ENCODE measurements at regions of chr4 and their contacts with region 1.

Region 1: DNA sequence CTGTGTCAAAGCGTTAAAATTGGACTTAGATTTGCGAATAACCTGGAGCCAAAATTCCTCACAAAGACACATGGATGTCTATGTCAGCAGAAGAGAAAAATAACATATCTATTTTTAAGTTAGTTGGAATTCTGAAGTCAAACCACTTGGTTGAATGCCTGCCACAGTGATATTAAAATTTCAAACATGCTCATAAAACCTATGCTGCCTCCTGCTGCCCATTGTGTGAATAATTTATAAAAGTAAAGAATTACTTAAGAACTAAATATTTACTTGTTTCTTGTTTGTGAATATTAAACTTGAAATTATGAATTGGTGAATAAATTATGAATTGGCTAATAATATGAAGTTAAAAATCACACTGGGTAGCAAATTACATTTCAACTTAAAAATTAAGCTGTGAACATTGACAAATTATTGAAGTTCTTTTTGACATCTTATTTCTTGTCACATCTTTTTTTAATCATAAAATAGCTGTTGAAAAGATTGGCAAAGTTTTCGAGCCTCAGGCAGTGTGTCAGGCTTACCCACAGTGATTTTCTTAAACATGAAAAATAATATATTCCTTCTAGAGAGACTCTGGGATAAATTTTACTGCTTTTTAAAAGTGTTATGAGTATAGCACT is 35.4 kb downstream of the FABP2 start:
- DNase-seq: peak in 1 of 2 experiments; percentile 41
- H3K4me3 ChIP-seq: no peak overlapping the region
- H3K27ac ChIP-seq: no peak overlapping the region
- H3K4me1 ChIP-seq: no peaks in the 10 kb centered on the region
- H3K27me3 ChIP-seq: no peaks in the 10 kb centered on the region
- CTCF ChIP-seq: peak; percentile 69

Region 2: DNA sequence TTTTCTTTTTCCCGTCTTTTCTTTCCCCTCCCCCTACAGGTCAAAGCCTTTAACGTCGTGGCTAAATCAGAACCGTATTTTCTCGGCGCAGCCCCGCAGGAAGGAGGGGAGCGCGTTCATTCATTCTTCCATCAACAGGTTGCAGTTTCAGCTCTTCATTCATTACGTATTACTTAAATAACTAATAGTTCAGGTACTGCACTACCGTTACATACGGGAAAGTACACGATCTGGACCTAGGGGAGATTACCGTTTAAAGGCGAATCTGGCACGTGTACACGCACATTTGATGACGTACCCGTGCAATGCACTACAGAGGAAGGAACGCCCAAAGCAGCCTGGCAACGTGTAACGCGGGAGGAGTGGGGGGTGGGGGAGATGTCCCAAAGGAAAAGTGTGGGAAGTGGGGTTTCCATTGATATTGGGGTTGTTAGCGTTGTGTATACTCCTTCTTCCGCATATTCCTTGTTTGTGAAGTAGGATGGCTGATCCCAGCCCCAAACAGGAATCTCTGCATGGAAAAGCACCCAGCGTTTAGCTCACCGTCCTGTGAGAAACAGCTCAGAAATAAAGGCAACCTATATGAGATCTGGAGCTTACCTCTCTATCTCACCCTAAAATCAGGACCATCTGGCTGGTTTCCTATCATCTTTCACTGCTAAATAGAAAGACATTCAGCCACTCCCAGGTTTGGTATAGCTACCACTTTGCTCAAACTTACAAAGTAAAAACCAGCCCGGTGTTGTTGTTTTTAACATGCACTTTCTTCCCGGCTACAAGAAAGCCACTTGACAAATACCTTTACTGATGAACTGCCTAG is 450.0 kb before region 1 on chr4:
- CTCF ChIA-PET with region 1: no interaction called
- POLR2A ChIA-PET with region 1: interaction called, 10 read pairs
- intact Hi-C with region 1: no loop called
- DNase-seq: peak; percentile 27 to 44
- H3K4me3 ChIP-seq: peak overlapping the region; percentile 84
- H3K27ac ChIP-seq: peak overlapping the region; percentile 68
- H3K4me1 ChIP-seq: peaks cover 9% of the 10 kb centered on the region
- H3K27me3 ChIP-seq: no peaks in the 10 kb centered on the region
- CTCF ChIP-seq: no peak

Region 3: DNA sequence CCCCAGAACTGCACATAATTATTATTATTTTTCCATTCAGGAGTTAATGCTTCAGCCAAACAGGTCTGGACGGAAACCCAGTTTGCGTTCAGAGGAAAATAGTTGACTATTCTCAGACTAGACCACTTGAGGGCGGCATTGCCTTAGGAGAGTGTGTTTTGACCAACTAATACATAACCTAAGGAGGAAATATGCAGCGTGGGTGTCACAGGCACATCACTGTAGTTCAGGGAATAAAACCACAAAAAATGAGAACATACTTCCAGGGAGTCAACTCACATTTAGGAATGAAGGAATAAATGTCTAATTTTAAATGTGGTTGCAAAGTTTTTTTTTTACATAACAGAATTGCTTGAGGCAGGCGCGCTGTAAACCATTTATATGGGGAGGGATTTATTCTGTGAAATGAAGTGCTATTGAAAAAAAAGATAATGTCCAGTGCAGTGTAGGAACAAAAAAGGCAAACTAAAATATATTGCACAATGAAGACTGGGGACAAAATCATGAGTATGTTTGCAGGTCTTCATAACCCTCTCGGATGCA is 304.6 kb before region 1 on chr4:
- CTCF ChIA-PET with region 1: no interaction called
- POLR2A ChIA-PET with region 1: no interaction called
- intact Hi-C with region 1: loop called (anchors 5 kb)
- DNase-seq: peak; percentile 29 to 45
- H3K4me3 ChIP-seq: no peak overlapping the region
- H3K27ac ChIP-seq: no peak overlapping the region
- H3K4me1 ChIP-seq: no peaks in the 10 kb centered on the region
- H3K27me3 ChIP-seq: no peaks in the 10 kb centered on the region
- CTCF ChIP-seq: peak; percentile 81

Region 4: DNA sequence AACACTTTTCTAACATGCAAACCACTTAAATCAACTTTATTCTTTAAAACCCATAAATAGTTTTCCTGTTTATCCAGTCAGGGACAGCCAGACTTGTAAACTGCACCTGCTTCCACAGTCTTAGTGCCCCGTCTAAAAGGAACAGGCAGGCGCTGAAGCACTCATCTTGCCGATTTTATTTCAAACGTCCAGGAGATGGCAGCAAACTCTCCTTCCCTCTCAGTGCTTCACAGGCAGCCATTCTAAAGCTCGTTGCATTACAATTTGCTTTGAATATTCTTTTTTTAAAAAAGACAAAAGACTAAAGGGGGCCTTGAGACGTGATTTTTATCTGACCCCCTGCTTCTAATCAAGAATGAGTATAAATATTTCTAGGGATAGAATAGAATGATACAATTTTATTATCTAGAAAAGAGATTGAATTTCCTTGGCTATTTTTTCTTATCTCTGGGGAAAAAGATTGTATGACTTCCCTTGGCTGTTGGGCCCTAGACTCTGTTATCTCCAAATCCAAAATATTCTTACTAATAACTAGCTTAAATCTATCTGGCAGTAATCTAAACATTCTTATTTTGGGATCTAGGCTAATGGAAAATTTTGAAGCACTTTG is 244.4 kb before region 1 on chr4:
- CTCF ChIA-PET with region 1: no interaction called
- POLR2A ChIA-PET with region 1: interaction called, 7 read pairs
- intact Hi-C with region 1: loop called (anchors 5 kb)
- DNase-seq: peak; percentile 14 to 40
- H3K4me3 ChIP-seq: no peak overlapping the region
- H3K27ac ChIP-seq: no peak overlapping the region
- H3K4me1 ChIP-seq: no peaks in the 10 kb centered on the region
- H3K27me3 ChIP-seq: no peaks in the 10 kb centered on the region
- CTCF ChIP-seq: peak; percentile 69